ENCODE measurements at regions of chr1 and their contacts with region 1.

Region 1: DNA sequence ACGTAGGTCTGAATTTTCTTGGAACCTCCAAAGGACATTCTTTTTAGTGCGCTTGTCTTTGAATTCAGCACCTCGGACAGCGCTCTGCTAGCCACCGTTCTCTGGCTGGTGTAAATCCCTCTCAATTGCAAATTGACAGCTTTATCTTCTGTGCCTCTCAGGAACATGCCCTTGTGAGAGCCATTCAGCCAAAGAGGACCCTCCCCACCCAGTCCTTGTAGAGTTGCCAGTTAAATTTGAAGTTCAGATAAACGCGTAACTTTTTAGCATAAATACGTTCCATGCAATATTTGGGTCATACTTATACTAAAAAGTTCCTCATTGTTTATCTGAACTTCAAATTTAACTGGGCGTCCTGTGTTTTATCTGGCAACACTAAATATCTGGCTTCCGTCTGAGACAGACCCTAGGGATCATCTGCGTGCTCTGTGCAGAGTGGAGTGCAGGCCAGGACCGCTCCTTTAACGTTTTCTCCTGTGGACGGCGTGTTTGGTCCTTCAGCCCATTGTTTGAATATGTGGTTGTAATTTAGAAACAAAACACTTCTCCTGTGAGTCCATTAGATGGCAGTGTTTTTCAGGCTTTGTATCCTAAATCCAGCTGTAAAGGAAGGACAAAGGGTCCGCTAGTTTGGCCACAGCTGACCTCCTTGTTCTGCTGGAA is 7.0 kb downstream of the KCNAB2 start:
- DNase-seq: no peak
- H3K4me3 ChIP-seq: no peak overlapping the region
- H3K27ac ChIP-seq: no peak overlapping the region
- H3K4me1 ChIP-seq: peaks cover 3 to 12% (median 7%) of the 10 kb centered on the region in 4 donors
- H3K27me3 ChIP-seq: peaks cover 0 to 3% (median 0%) of the 10 kb centered on the region in 4 donors
- CTCF ChIP-seq: peak in 1 of 3 experiments; percentile 38
- EP300 ChIP-seq: no peak
- POLR2A ChIP-seq: no peak

Region 2: DNA sequence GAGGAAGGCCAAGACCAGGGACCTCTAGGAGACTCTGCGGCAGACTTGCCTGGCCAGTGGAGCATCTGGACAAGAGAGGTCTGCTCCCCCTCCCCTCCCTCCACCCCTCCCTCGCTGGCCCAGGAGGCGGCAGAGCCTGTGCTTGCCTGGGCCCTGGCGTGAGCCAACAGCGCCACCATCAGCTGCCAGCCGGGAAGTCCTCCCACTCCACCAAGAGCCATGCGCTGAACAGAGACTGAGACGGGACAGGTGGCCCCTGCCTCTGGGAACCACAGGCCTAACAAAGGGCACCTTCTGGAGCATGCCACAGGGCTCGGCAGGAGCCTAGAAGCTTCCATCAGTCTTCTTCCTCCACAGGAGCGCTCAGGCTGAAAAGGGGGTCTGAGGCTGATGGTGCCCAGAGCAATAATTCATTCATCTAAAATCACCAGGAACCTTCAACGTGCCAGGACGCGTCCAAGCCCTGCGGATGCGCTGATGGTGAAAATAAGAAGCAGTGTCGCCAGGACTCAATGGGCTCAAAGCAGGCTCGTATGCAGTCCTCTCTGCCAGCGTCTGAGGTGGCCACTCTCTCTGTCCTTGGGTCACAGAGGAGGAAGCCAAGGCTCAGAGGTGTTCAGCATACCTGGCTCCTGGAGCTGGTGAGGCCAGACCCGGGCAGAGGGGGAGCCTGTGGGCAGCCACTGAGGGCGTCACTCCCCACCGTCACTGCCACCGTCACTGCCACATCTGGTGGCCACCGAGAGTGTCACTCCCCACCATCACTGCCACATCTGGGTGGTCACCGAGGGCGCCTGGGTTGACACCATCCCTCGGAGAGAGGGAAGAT is 221.7 kb before region 1 on chr1:
- intact Hi-C with region 1: no loop called
- DNase-seq: no peak
- H3K4me3 ChIP-seq: no peak overlapping the region
- H3K27ac ChIP-seq: no peak overlapping the region
- H3K4me1 ChIP-seq: no peaks in the 10 kb centered on the region
- H3K27me3 ChIP-seq: peaks cover 0 to 61% (median 10%) of the 10 kb centered on the region in 4 donors
- CTCF ChIP-seq: no peak
- EP300 ChIP-seq: no peak
- POLR2A ChIP-seq: no peak

Region 3: DNA sequence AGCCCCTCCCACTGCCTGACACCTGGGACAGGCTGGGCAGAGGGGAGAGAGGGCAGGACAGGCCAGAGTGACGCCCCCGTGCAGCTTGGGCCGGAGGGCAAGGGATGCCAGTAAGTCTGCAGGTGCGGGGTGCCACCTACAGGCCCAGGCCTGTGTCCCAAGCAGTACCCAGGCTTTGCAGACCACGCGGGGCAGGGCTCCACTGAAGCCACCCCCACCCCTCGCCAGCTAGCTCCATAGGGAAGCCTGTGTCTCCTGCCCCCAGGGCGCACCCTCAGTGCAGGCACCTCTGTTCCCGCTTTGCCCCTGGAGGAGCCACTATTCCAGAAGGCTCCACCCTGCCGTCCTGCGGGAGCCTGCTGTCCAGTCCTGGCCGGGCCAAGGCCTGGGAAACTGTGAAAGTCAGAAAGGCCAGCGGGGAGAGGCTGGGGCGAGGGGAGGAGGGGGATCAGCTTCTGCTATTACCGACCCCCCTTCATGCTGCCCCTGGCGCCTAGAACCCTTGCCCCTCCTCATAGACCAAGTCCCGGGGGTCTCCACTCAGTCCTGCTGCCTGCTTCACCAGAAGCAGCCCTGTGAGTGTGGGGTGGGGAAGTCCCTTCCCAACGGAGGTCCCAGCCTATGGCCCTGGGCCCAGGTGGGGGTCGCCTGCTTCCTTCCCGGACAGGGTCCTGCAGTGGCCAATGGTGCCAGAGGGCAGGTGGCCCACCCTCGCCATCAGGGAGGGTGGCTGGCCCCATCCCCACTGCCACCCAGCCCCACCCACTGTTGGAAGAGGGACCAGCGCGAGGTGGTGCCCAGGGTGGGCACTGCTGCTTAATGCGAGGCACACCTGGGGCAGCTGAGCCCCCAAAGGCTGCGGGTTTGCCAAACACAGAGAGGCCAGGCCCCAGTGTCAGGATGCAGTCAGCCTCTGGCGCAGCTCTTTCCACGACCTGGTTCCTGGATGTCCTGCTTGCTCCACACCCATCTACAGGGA is 47.4 kb after region 1 on chr1:
- intact Hi-C with region 1: no loop called
- DNase-seq: no peak
- H3K4me3 ChIP-seq: no peak overlapping the region
- H3K27ac ChIP-seq: no peak overlapping the region
- H3K4me1 ChIP-seq: peaks cover 0 to 10% (median 6%) of the 10 kb centered on the region in 4 donors
- H3K27me3 ChIP-seq: peaks cover 0 to 56% (median 3%) of the 10 kb centered on the region in 4 donors
- CTCF ChIP-seq: no peak
- EP300 ChIP-seq: no peak
- POLR2A ChIP-seq: no peak

Region 4: DNA sequence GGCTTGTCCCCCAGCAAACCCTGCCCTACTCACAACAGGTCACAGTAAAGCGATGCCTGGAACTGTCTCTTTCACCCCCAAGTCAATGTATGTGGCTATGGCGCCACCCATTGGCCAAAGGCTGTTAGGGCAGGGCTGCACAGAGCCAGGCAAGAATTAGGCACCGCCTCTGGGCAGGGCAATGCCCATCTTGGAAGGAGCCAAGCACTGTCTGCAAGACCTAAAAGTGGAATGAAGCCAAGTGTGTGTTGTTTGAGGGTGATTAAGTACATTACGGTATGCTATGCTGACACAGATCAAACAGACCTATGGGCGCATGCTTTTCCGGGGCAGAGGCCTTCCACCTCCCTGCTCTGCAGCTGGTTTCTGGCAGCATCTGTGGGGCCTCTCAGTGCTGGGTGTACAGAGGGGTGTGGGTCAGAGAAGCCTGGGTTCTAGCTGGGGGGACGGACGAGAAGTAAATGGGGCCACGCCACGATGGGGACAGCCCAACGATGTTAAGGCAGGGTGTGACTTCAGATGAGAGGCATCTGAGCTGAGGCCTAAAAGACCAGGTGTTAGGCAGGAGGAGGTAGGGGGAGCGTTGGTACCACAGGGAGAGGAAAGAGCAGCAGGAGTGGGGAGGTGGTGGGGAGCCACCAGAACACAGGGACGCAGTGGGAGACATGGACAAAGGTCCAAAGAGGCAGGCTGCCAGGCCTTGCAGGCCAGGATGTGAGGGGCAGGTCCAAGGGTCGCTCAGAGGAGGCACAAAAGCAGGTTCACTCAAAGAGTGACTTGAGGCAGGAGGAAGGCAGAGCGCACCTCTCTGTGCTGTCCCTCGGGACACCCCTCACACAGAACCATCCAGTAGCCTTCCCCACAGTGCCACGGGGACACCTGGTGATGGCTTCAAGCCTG is 291.1 kb after region 1 on chr1:
- intact Hi-C with region 1: loop called (anchors 10 kb)
- DNase-seq: no peak
- H3K4me3 ChIP-seq: no peak overlapping the region
- H3K27ac ChIP-seq: no peak overlapping the region
- H3K4me1 ChIP-seq: peaks cover 7 to 10% (median 10%) of the 10 kb centered on the region in 4 donors
- H3K27me3 ChIP-seq: no peaks in the 10 kb centered on the region
- CTCF ChIP-seq: peak; percentile 72 to 76 (median 72)
- EP300 ChIP-seq: no peak
- POLR2A ChIP-seq: no peak

Measured in esophagus muscularis mucosa (tissue), 4 donors.